ENCODE measurements at regions of chr3 and their contacts with region 1.

Region 1: GRCh38 chr3:183122257-183122932 is 23.1 kb upstream of the MCCC1 start:
- DNase-seq: no peak
- ATAC-seq: peak; percentile 91
- H3K4me3 ChIP-seq: no peak overlapping the region
- H3K27ac ChIP-seq: no peak overlapping the region
- H3K4me1 ChIP-seq: peaks cover 0 to 2% of the 10 kb centered on the region in 2 donors
- H3K27me3 ChIP-seq: no peaks in the 10 kb centered on the region

Region 2: GRCh38 chr3:183180105-183180783 is 57.8 kb after region 1 on chr3:
- intact Hi-C with region 1: loop called (anchors 2 to 5 kb)
- DNase-seq: no peak
- ATAC-seq: no peak
- H3K4me3 ChIP-seq: no peak overlapping the region
- H3K27ac ChIP-seq: no peak overlapping the region
- H3K4me1 ChIP-seq: no peaks in the 10 kb centered on the region
- H3K27me3 ChIP-seq: no peaks in the 10 kb centered on the region

Region 3: DNA sequence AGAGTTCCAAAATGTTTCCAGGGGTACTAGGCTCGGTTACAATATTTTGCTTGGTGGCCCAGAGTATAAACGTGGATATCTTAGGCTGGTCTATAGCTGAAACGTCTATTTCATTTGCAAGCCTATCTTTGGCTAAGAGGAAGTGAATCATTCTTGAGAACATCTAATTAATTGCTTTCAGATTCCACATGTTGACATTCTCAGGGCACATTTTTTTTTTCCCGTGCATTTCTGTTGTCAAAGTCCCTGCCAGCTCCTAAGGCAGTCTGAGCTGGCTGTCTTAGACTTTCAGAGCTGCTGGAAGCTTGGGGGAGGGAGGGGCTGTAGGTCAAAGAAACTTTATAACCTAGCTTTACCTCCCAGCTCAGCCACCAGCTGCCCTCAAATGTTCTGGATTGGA is 63.3 kb after region 1 on chr3:
- intact Hi-C with region 1: loop called (anchors 2 to 5 kb)
- DNase-seq: no peak
- ATAC-seq: no peak
- H3K4me3 ChIP-seq: no peak overlapping the region
- H3K27ac ChIP-seq: no peak overlapping the region
- H3K4me1 ChIP-seq: no peaks in the 10 kb centered on the region
- H3K27me3 ChIP-seq: no peaks in the 10 kb centered on the region

Region 4: GRCh38 chr3:183285828-183286457 is 163.5 kb after region 1 on chr3:
- intact Hi-C with region 1: loop called (anchors 5 to 10 kb)
- DNase-seq: peak; percentile 92 to 94
- ATAC-seq: peak; percentile 90
- H3K4me3 ChIP-seq: no peak overlapping the region
- H3K27ac ChIP-seq: peak overlapping the region; percentile 57 to 92
- H3K4me1 ChIP-seq: peaks cover 0 to 6% of the 10 kb centered on the region in 2 donors
- H3K27me3 ChIP-seq: no peaks in the 10 kb centered on the region

Region 5: DNA sequence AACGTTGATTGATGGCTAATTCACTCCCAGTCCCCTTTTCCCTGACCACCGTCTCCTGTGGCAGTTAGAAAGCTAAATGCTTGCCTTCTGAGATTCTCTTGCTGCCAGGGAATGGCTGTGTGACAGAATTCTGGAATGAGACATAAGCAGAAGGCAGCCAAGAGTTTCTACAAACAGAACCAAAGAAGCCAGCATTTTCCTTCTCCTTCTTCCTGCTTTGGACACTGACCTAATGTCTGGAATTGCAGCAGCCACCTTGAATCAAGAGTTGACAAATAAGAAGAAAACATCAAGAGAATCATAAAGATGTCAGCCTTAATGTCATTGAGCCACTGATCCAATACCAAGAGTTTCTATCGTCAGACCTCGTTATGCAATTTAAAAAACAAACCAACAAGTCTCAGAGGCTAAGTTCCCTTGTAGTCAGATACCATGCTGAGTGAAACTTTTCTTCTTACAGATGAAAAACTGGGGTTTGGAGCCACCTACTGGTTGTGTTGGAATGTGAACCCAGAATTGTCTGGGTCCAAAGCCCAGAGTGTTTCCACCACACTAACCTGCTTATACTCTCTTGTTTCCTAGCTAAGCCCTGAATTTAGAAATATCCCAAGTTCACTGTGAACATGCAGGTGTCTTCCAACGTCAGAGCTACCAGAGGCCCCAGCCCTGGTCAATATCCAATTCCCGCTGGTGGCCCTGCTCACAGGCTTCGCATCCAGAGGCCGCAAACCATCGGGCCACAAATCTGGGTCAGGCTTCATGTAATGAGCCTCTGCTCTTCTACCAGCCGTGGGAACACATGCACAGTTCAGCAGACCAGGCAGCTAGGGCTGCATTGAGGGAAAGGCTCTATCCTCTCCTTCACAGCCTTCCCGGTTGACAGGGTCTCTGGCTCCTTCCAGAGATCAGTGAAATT is 263.6 kb after region 1 on chr3:
- intact Hi-C with region 1: loop called (anchors 1 to 2 kb)
- DNase-seq: no peak
- ATAC-seq: peak; percentile 91
- H3K4me3 ChIP-seq: no peak overlapping the region
- H3K27ac ChIP-seq: peak overlapping the region in 1 of 2 donors; percentile 65
- H3K4me1 ChIP-seq: no peaks in the 10 kb centered on the region
- H3K27me3 ChIP-seq: no peaks in the 10 kb centered on the region